ENCODE measurements at regions of chr1 and their contacts with region 1.

Region 1: GRCh38 chr1:55021965-55022546 is 17.3 kb upstream of the PCSK9 start:
- H3K4me3 ChIP-seq: no peak overlapping the region
- H3K27ac ChIP-seq: no peak overlapping the region
- H3K4me1 ChIP-seq: no peaks in the 10 kb centered on the region
- CTCF ChIP-seq: peak; percentile 98

Region 2: GRCh38 chr1:54987919-54988705 is 33.9 kb before region 1 on chr1:
- CTCF ChIA-PET with region 1: interaction called, 10 read pairs
- POLR2A ChIA-PET with region 1: no interaction called
- H3K4me3 ChIP-seq: no peak overlapping the region
- H3K27ac ChIP-seq: no peak overlapping the region
- H3K4me1 ChIP-seq: peaks cover 5% of the 10 kb centered on the region; the same call in 1 of the 2 replicates
- CTCF ChIP-seq: no peak

Region 3: GRCh38 chr1:55007625-55008024 is 14.4 kb before region 1 on chr1:
- CTCF ChIA-PET with region 1: interaction called, 13 read pairs
- POLR2A ChIA-PET with region 1: no interaction called
- H3K4me3 ChIP-seq: no peak overlapping the region
- H3K27ac ChIP-seq: no peak overlapping the region
- H3K4me1 ChIP-seq: no peaks in the 10 kb centered on the region
- CTCF ChIP-seq: no peak

Region 4: GRCh38 chr1:55428944-55429931 is 407.2 kb after region 1 on chr1:
- CTCF ChIA-PET with region 1: no interaction called
- POLR2A ChIA-PET with region 1: no interaction called
- H3K4me3 ChIP-seq: no peak overlapping the region
- H3K27ac ChIP-seq: no peak overlapping the region
- H3K4me1 ChIP-seq: 0 out of 2 replicates have a peak, but pooled peaks cover 2% of the 10 kb centered on the region
- CTCF ChIP-seq: no peak